A673 (cell line): ENCODE measurements at regions of chr19 and their contacts with region 1.

Region 1: DNA sequence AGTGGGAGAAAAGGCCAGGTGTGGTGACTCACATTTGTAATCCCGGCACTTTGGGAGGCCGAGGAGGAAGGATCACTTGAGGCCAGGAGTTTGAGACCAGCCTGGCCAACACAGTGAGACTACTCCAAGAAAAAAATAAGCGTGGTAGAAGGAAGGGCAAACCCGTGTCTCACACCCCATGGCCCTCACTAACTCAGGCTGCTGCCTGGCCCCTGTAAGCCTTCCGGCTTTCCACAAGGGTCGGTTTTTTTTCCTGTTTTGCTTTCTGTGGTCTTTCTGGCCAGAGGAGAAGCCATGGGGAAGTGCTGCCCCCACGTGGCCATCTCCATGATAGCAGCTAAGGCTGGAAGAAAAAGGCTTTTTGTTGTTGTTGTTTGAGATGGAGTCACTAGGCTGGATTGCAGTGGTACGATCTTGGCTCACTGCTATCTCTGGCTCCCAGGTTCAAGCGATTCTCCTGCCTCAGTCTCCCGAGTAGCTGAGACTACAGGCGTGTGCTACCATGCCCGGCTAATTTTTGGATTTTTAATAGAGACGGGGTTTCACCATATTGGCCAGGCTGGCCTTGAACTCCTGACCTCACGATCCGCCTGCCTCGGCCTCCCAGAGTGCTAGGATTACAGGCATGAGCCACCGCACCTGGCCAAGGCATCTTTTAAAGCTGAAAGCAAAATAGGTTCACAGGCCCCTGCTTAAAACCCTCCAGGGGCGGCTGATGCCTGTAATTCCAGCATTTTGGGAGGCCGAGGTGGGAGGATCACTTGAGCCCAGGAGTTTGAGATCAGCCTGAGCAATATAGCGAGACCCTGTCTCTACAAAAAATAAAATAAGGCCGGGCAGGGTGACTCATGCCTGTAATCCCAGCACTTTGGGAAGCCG is 7.5 kb upstream of the ARHGEF18 start:
- DNase-seq: peak; percentile 89
- H3K4me3 ChIP-seq: no peak overlapping the region
- H3K27ac ChIP-seq: no peak overlapping the region
- H3K4me1 ChIP-seq: no peaks in the 10 kb centered on the region
- H3K27me3 ChIP-seq: peaks cover 7% of the 10 kb centered on the region
- CTCF ChIP-seq: peak; percentile 92

Region 2: DNA sequence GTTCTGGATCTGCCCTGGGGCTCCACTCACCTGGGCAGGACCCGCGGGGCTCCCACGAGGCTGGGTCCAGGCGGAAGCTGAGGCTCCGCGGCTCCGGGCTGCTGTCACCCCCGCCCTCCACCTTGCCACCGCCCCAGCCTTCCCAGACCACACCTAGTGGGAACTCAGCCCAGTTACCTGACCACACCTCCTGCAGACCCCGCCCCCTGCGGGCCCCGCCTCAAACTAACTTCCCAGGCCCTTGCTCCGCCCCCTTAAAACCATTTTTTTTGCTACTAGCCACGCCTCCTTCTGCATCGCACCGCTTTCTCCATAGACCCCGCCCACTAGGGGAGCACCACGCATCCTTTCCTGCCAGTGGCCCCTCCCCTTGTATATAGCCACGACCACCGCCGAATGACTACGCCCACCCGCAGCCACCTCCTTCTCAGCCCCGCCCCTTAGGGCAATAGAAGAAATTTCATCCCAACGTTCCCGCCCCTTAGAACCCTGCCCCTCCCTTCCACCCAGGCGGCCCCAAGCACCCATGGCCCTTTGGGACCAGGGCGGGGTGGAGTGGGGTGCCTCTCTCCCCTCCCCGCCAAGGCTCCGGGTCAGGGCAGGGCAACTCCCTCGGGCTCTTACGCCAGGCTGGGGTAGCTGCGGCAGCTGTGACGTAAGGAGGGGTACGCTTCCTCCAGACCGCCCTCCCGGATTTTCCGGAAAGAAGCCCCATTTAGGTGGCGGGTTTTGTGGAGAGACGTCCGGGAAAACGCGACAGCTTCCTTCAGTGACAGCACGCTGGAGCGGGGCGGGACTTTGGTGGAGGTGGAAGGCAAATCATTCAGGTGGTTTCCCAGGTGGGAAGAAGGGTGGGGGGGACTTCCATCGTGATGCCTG is 573.6 kb before region 1 on chr19 and contains the start of gene SH2D3A:
- CTCF ChIA-PET with region 1: no interaction called
- POLR2A ChIA-PET with region 1: no interaction called
- intact Hi-C with region 1: no loop called
- DNase-seq: peak; percentile 95
- H3K4me3 ChIP-seq: peak within 1 kb of the TSS; percentile 52
- H3K27ac ChIP-seq: peak within 1 kb of the TSS; percentile 49
- H3K4me1 ChIP-seq: peaks cover 11% of the 10 kb centered on the region
- H3K27me3 ChIP-seq: no peaks in the 10 kb centered on the region
- CTCF ChIP-seq: no peak
- total RNA-seq, gene SH2D3A: 0.95 and 1.7 TPM in 2 replicates

Region 3: GRCh38 chr19:7098701-7099596 is 242.2 kb before region 1 on chr19:
- CTCF ChIA-PET with region 1: interaction called, 12 read pairs
- POLR2A ChIA-PET with region 1: no interaction called
- intact Hi-C with region 1: loop called (anchors 1 kb)
- DNase-seq: peak; percentile 92
- H3K4me3 ChIP-seq: peak overlapping the region; percentile 58
- H3K27ac ChIP-seq: peak overlapping the region; percentile 81
- H3K4me1 ChIP-seq: peaks cover 3% of the 10 kb centered on the region
- H3K27me3 ChIP-seq: no peaks in the 10 kb centered on the region
- CTCF ChIP-seq: no peak

Region 4: DNA sequence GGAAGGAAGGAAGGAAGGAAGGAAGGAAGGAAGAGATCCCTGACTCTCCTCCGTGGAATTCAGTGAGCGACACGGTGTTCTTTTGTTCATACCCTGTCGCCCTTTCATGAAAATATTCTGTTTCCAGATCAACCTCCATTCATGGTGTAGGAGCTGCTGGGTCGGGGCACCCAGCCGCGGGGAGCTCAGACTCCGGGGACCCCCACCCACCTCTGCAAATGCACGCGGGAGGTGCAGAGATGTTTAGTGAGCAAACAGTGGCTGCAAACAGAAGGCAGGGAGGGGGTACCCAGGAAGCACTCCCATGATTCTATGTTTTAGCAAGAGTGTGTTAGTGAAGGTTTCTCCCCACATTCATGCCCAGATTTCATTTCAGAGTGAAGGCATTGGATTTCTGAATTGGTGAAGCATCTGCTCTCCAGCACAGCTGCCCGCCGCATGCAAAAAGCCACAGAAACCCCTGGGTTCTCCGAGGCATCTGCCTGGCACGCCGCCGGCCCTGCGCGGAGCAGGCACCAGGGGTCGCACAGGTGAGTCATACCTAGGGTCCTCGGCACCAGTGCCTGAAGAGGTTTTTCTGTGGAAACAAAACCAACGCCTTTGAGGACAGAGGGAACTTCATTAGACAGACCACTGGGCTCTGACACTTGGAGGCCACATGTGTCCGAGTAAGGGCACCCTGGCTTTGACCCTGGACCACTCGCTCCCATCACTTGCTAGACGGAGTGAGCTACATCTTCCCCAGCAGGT is 191.1 kb before region 1 on chr19:
- CTCF ChIA-PET with region 1: interaction called, 4 read pairs
- POLR2A ChIA-PET with region 1: no interaction called
- intact Hi-C with region 1: loop called (anchors 2 kb)
- DNase-seq: no peak
- H3K4me3 ChIP-seq: no peak overlapping the region
- H3K27ac ChIP-seq: no peak overlapping the region
- H3K4me1 ChIP-seq: no peaks in the 10 kb centered on the region
- H3K27me3 ChIP-seq: no peaks in the 10 kb centered on the region
- CTCF ChIP-seq: no peak